WTC11 (cell line): ENCODE measurements at regions of chr10 and their contacts with region 1.

Region 1: GRCh38 chr10:102132563-102133372 is at the start of gene PPRC1:
- DNase-seq: peak; percentile 98
- ATAC-seq: peak; percentile 95
- H3K4me3 Mint-ChIP-seq: peak within 1 kb of the TSS; percentile 89
- H3K27ac Mint-ChIP-seq: peak within 1 kb of the TSS; percentile 98
- H3K4me1 Mint-ChIP-seq: peaks cover 22% of the 10 kb centered on the region
- H3K27me3 Mint-ChIP-seq: peaks cover 4% of the 10 kb centered on the region; the same call in 1 of the 2 replicates
- CTCF ChIP-seq: peak; percentile 86
- total RNA-seq, gene PPRC1: 68.0 to 79.4 TPM (median 69.7 TPM) in 3 replicates

Region 2: GRCh38 chr10:102114861-102115618 is 17.7 kb before region 1 on chr10:
- CTCF ChIA-PET with region 1: interaction called, 11 read pairs
- POLR2A ChIA-PET with region 1: interaction called, 5 read pairs
- DNase-seq: peak; percentile 91
- ATAC-seq: peak; percentile 60
- H3K4me3 Mint-ChIP-seq: peak overlapping the region; percentile 88
- H3K27ac Mint-ChIP-seq: peak overlapping the region; percentile 93
- H3K4me1 Mint-ChIP-seq: peaks cover 67% of the 10 kb centered on the region
- H3K27me3 Mint-ChIP-seq: no peaks in the 10 kb centered on the region
- CTCF ChIP-seq: no peak

Region 3: GRCh38 chr10:102120142-102120990 is 12.4 kb before region 1 on chr10 and contains the start of gene LDB1:
- CTCF ChIA-PET with region 1: interaction called, 14 read pairs
- POLR2A ChIA-PET with region 1: interaction called, 7 read pairs
- DNase-seq: peak; percentile 75
- ATAC-seq: peak; percentile 9
- H3K4me3 Mint-ChIP-seq: peak within 1 kb of the TSS; percentile 84
- H3K27ac Mint-ChIP-seq: peak within 1 kb of the TSS; percentile 98
- H3K4me1 Mint-ChIP-seq: peaks cover 62% of the 10 kb centered on the region
- H3K27me3 Mint-ChIP-seq: no peaks in the 10 kb centered on the region
- CTCF ChIP-seq: no peak
- total RNA-seq, gene LDB1: 89.1 to 100 TPM (median 94.2 TPM) in 3 replicates